ENCODE measurements at regions of chr12 and their contacts with region 1.

Region 1: DNA sequence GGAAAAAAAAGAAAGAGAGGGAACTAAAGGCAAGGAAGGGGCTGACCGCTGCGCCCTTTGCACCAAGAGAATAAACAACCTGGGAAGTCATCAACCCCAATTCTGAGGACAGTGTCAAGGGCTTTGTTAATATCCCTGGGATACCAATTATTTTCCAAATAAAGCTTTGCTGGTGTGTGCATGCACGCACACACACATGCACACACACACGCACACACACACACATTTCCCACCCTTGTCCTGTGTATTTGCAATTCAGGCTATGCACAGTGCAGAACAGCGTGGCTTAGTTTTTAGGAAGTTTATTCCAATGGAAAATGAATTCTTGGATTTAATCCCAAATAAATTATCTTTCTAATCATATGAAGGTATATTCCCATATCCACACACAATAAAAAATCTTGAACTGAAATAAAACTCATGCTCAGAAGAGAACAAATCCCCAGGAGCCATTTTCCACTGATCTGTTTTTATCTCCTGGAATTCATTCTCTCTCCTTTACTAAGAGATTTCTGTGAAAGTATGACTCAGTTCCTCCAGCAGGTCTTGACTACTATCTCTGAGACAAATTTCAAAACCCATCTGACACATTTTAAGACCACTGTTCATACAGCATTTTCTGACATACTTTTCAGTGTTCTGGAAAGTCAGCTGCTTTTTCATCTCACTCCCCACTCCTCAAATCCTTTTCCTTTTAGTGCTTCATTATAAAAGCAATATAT is 334.4 kb upstream of the ATP2B1 start:
- DNase-seq: no peak
- ATAC-seq: peak; percentile 77
- H3K4me3 Mint-ChIP-seq: no peak overlapping the region
- H3K27ac Mint-ChIP-seq: no peak overlapping the region
- H3K4me1 Mint-ChIP-seq: peaks cover 10% of the 10 kb centered on the region
- H3K27me3 Mint-ChIP-seq: no peaks in the 10 kb centered on the region

Region 2: GRCh38 chr12:89671469-89671868 is 371.6 kb before region 1 on chr12:
- CTCF ChIA-PET with region 1: no interaction called
- POLR2A ChIA-PET with region 1: no interaction called
- intact Hi-C with region 1: loop called in 1 of 2 experiments (anchors 5 kb)
- DNase-seq: no peak
- ATAC-seq: no peak
- H3K4me3 Mint-ChIP-seq: no peak overlapping the region
- H3K27ac Mint-ChIP-seq: peak overlapping the region; percentile 64
- H3K4me1 Mint-ChIP-seq: peaks cover 78% of the 10 kb centered on the region
- H3K27me3 Mint-ChIP-seq: no peaks in the 10 kb centered on the region

Region 3: GRCh38 chr12:89856431-89856830 is 186.7 kb before region 1 on chr12:
- CTCF ChIA-PET with region 1: no interaction called
- POLR2A ChIA-PET with region 1: no interaction called
- intact Hi-C with region 1: loop called in 1 of 2 experiments (anchors 5 kb)
- DNase-seq: no peak
- ATAC-seq: peak; percentile 82
- H3K4me3 Mint-ChIP-seq: no peak overlapping the region
- H3K27ac Mint-ChIP-seq: no peak overlapping the region
- H3K4me1 Mint-ChIP-seq: peaks cover 54% of the 10 kb centered on the region
- H3K27me3 Mint-ChIP-seq: no peaks in the 10 kb centered on the region

Region 4: DNA sequence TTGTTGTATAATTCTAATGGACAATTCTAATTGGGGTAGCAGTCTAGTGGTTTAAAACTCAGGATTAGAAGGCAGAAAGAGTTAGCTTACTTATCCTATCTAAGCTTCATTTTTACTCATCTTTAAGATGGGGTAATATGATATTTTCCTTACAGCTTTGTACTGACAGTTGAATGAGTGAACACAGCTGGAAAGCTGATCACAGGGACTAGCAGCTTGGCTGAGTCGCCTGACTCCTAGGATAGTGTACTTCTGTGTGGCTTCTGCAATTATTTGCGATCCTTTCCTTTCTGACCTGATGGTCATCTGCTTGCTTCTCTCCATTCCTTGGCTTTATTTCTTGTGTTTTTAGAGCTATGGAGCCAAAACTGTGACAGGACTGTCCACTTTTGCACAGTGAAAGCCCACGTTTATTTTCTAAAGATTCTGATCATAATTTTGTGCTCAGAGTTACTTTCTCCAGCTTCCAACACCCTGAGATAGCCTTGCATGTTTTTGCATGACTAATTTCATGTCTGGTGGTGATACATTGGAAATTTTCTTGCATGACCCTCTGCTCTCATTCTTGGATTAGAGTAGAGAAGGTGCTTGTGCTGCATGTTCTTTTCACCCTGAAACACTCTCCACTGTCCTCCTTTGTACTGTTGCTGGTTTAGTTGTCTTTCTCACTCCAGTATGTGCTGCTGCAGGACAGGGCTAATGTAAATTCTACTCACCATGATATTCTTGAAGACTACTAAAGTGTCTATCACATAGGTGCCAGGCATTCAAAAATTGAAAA is 42.6 kb after region 1 on chr12:
- CTCF ChIA-PET with region 1: interaction called, 3 read pairs
- POLR2A ChIA-PET with region 1: no interaction called
- intact Hi-C with region 1: loop called in 1 of 2 experiments (anchors 1 kb)
- DNase-seq: no peak
- ATAC-seq: peak; percentile 49
- H3K4me3 Mint-ChIP-seq: no peak overlapping the region
- H3K27ac Mint-ChIP-seq: no peak overlapping the region
- H3K4me1 Mint-ChIP-seq: peaks cover 14% of the 10 kb centered on the region
- H3K27me3 Mint-ChIP-seq: no peaks in the 10 kb centered on the region

Region 5: GRCh38 chr12:90199006-90199405 is 155.9 kb after region 1 on chr12:
- CTCF ChIA-PET with region 1: no interaction called
- POLR2A ChIA-PET with region 1: no interaction called
- intact Hi-C with region 1: no loop called
- DNase-seq: no peak
- ATAC-seq: no peak
- H3K4me3 Mint-ChIP-seq: no peak overlapping the region
- H3K27ac Mint-ChIP-seq: no peak overlapping the region
- H3K4me1 Mint-ChIP-seq: peaks cover 16% of the 10 kb centered on the region
- H3K27me3 Mint-ChIP-seq: peaks cover 2% of the 10 kb centered on the region

Region 6: DNA sequence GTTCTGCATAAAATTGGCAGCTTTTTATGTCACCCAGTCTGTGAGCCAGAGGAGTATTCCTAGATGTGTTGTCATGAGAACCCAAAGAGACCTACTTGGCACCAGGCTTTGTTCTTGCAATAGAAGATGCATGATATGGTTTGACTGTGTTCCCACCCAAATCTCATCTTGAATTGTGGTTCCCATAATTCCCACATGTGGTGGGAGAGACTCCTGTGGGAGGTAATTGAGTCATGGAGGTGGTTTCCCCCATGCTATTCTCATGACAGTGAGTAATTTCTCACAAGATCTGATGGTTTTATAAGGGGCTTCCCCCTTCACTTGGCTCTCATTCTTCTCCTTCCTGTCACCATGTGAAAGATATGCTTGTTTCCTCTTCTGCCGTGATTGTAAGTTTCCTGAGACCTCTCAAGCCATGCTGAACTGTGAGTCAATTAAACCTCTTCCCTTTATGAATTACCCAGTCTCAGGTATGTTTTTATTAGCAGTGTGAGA is 237.5 kb after region 1 on chr12:
- CTCF ChIA-PET with region 1: no interaction called
- POLR2A ChIA-PET with region 1: no interaction called
- intact Hi-C with region 1: loop called in 1 of 2 experiments (anchors 10 kb)
- DNase-seq: peak; percentile 33
- ATAC-seq: peak; percentile 74
- H3K4me3 Mint-ChIP-seq: no peak overlapping the region
- H3K27ac Mint-ChIP-seq: peak overlapping the region; percentile 11
- H3K4me1 Mint-ChIP-seq: peaks cover 28% of the 10 kb centered on the region
- H3K27me3 Mint-ChIP-seq: peaks cover 16% of the 10 kb centered on the region